Mammary epithelial cell (primary cell): ENCODE measurements at regions of chr1 and their contacts with region 1.

Region 1: DNA sequence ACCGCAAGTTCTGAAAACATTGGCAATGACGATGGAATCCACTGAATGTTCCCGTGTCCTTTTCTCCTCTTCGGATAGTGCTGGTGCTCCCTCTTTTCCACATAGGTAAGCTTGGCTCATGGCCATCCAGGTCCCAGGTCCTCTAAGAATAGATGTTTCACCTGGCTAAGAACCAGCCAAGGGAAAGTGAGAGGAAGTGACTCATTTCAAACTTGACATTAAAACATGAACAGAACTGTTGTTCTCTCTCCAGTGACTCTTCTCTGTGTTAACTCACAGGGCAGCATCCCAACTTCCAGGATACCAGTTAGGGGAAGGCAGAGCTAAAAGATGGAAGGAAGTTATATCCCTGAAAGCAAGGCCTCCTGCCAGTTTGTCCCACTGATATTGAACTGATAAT is 493.8 kb upstream of the CHRM3 start:
- DNase-seq: peak; percentile 96
- H3K4me3 ChIP-seq: no peak overlapping the region
- H3K27ac ChIP-seq: no peak overlapping the region
- H3K4me1 ChIP-seq: peaks cover 30% of the 10 kb centered on the region
- H3K27me3 ChIP-seq: no peaks in the 10 kb centered on the region
- CTCF ChIP-seq: no peak

Region 2: GRCh38 chr1:237873487-237874211 is 1019.0 kb before region 1 on chr1:
- CTCF ChIA-PET with region 1: no interaction called
- dilution Hi-C with region 1: no loop called
- in situ Hi-C with region 1: no loop called
- intact Hi-C with region 1: loop called (anchors 10 kb)
- DNase-seq: peak; percentile 98
- H3K4me3 ChIP-seq: no peak overlapping the region
- H3K27ac ChIP-seq: peak overlapping the region; percentile 78
- H3K4me1 ChIP-seq: peaks cover 34% of the 10 kb centered on the region
- H3K27me3 ChIP-seq: no peaks in the 10 kb centered on the region
- CTCF ChIP-seq: no peak

Region 3: DNA sequence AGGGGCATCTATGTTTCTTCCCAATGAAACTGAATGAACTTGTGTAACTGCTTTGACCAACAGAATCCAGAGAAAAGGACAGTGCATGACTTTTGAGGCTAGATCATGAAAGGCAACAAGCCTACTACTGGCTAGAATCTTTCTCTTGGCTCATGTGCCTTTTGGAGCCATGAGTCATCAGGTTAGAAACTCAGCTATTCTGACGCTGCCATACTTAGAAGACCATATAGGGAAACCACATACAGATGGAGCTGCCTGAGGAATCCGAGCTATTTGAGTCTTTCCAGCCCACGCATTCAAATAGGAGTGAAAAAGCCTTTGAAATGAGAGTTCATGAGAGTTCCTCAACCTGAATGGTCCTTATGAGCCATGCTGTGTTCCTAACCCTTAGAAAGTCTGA is 244.7 kb before region 1 on chr1:
- CTCF ChIA-PET with region 1: no interaction called
- dilution Hi-C with region 1: no loop called
- in situ Hi-C with region 1: no loop called
- intact Hi-C with region 1: loop called (anchors 10 kb)
- DNase-seq: peak; percentile 94
- H3K4me3 ChIP-seq: no peak overlapping the region
- H3K27ac ChIP-seq: peak overlapping the region; percentile 47
- H3K4me1 ChIP-seq: peaks cover 13% of the 10 kb centered on the region
- H3K27me3 ChIP-seq: no peaks in the 10 kb centered on the region
- CTCF ChIP-seq: no peak

Region 4: GRCh38 chr1:239293350-239294110 is 400.9 kb after region 1 on chr1:
- CTCF ChIA-PET with region 1: no interaction called
- dilution Hi-C with region 1: no loop called
- in situ Hi-C with region 1: no loop called
- intact Hi-C with region 1: no loop called
- DNase-seq: no peak
- H3K4me3 ChIP-seq: no peak overlapping the region
- H3K27ac ChIP-seq: no peak overlapping the region
- H3K4me1 ChIP-seq: no peaks in the 10 kb centered on the region
- H3K27me3 ChIP-seq: no peaks in the 10 kb centered on the region
- CTCF ChIP-seq: no peak